Sciatic nerve (tissue), 2 donors: ENCODE measurements at regions of chr11 and their contacts with region 1.

Region 1: DNA sequence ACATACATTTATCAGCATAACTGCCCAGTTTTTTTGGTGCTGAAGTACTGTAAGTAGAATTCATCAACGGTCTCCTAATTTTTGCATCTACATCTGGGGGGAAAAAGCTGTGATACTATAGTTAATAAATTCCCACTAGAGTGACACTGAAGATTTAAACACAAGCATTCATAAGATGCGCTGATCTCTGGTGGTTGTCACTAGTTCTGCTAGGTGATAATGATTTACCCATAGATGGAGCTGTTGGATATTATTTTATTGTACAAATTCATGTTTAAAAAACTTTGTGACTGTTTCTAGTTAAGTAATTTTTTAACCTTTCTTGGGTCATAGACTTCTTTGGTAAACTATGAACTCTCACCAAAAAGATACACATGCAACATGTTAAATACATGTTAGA is 106.6 kb downstream of the EMSY start:
- DNase-seq: no peak
- ATAC-seq: peak; percentile 42

Region 2: DNA sequence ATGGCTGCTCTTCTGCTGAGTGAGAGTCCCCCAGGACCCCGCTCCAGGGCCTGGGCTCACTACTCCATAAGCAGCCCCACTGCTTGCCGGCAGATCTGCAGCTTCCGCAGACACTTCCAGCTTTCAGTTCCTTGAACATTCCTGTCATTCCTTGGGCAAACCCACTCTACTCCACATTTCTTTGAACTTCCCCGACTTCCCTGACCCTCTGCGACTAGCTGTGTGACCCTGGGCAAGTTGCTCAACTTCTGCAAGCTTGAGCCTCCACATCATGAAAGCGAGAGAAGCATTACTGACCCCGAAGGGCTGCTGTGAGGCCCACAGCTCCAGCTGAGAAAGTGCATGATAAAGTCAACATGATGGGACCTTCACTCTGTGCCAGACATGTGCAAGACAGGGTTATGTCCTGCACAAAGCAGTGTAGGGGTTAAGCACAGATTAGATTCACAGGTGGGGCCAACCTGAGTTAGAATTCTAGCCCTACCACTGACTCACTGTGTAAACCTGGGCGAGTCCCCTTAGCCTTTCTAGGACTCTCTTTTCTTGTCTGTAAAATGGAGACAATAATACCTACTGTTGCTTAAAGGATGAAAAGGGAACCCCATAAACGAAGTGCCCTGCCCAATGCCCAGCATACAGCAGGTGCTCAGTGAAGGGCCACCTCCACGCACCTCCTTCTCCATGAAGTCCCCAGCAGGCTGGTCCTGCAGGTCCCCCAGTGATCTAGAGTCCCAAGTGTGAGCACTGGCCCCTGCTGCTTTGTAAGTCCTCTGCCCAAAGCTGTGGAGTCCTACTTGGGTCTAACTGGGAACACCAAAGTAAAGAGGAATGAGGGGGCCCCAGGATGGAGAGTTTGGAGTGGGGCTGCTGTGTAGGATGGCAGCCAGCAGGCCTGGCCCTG is 222.1 kb before region 1 on chr11:
- intact Hi-C with region 1: no loop called
- DNase-seq: no peak
- ATAC-seq: peak; percentile 70

Region 3: GRCh38 chr11:76568139-76568538 is 16.7 kb after region 1 on chr11:
- intact Hi-C with region 1: loop called (anchors 1 kb)
- DNase-seq: no peak
- ATAC-seq: no peak

Region 4: GRCh38 chr11:77710358-77710757 is 1159.0 kb after region 1 on chr11:
- intact Hi-C with region 1: no loop called
- DNase-seq: no peak
- ATAC-seq: no peak